Caco-2 (cell line): ENCODE measurements at regions of chr12 and their contacts with region 1.

Region 1: DNA sequence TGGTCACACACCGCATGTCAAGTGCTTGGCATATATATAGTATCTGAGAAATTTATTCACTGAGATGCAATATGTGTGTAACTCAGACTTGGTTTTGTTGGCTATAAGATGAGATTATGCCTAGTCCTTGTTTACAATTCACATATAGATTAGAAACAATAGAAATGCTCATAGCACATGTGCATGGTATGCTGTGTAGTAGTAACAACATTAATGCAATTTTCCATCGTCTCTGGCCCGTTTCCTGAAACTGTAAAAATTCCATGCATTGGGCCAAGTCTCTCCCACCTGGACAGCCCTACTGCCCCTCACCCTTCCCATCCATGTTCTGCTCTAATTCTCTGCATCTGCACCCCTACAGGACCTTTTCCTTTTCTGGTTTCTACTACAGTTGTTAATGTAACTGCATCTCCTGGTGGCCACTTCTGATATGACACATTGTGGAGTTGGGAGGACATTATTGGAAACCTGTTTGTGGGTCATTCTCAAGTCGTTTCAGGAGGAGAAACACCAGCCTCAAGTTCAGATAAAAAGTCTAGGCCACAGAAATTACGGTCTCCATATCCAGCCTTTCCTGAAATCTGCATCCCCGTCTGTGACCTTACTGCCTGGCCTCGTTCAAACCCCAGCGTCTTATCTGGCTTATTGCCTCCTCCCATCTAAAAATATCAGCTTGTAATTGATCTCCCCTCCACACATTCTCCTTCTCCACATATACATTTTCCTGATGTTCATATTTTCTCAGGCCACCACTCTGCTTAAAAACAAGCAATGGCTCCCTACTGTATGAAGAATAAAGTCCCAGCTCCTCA is 37.5 kb downstream of the EMP1 start:
- DNase-seq: peak; percentile 58 to 75
- H3K4me3 ChIP-seq: no peak overlapping the region
- H3K4me3 Mint-ChIP-seq: no peak overlapping the region
- H3K27ac Mint-ChIP-seq: no peak overlapping the region
- H3K4me1 ChIP-seq: no peaks in the 10 kb centered on the region
- H3K4me1 Mint-ChIP-seq: peaks cover 13% of the 10 kb centered on the region
- H3K27me3 ChIP-seq: no peaks in the 10 kb centered on the region
- H3K27me3 Mint-ChIP-seq: peaks cover 4% of the 10 kb centered on the region
- CTCF ChIP-seq: peak; percentile 95 to 96

Region 2: DNA sequence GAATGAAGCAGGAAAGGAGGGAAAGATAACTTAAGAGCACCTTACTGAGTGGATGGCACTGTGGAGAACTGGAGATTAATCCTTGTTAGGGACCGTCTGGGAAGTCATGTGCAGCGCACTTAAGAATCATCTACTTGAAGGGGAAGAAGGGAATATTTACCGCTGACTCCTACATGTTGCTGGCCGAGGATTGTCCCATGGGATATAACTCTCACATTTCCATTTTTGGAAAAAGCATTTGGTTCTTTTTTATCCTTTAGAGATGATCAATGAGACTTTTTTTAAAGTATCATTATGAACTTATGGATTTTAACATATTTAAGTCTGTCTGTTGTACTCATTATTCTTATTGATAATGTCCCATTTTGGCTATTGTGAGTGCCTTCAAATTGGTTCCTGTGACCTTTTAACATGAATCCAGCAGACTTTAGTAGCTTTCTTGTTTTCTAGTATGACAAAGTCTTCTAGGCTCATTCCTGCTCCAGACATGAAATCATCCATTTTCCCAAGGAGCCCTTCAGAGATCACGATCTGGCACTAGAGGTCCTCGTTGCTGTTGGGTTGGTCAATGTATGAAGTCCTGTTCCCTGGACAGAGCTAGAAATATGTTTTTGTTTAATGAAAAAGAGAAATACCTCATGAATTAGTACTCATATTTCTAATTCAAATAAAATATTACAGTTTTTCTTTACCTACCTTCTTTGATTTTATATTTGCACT is 210.1 kb before region 1 on chr12:
- CTCF ChIA-PET with region 1: no interaction called
- POLR2A ChIA-PET with region 1: no interaction called
- intact Hi-C with region 1: loop called (anchors 1 kb)
- DNase-seq: no peak
- H3K4me3 ChIP-seq: no peak overlapping the region
- H3K4me3 Mint-ChIP-seq: no peak overlapping the region
- H3K27ac Mint-ChIP-seq: no peak overlapping the region
- H3K4me1 ChIP-seq: no peaks in the 10 kb centered on the region
- H3K4me1 Mint-ChIP-seq: no peaks in the 10 kb centered on the region
- H3K27me3 ChIP-seq: no peaks in the 10 kb centered on the region
- H3K27me3 Mint-ChIP-seq: peaks cover 8% of the 10 kb centered on the region
- CTCF ChIP-seq: peak in 1 of 2 experiments; percentile 53